Prostate gland (tissue), 2 donors: ENCODE measurements at regions of chr2 and their contacts with region 1.

Region 1: GRCh38 chr2:157789933-157790511 is 86.1 kb downstream of the ACVR1 start:
- DNase-seq: peak; percentile 74
- H3K4me3 ChIP-seq: no peak overlapping the region
- H3K27ac ChIP-seq: peak overlapping the region; percentile 60
- H3K4me1 ChIP-seq: peaks cover 4% of the 10 kb centered on the region
- H3K27me3 ChIP-seq: no peaks in the 10 kb centered on the region
- CTCF ChIP-seq: no peak
- POLR2A ChIP-seq: no peak

Region 2: GRCh38 chr2:157603198-157603597 is 186.8 kb before region 1 on chr2:
- intact Hi-C with region 1: no loop called
- DNase-seq: no peak
- H3K4me3 ChIP-seq: no peak overlapping the region
- H3K27ac ChIP-seq: no peak overlapping the region
- H3K4me1 ChIP-seq: no peaks in the 10 kb centered on the region
- H3K27me3 ChIP-seq: no peaks in the 10 kb centered on the region
- CTCF ChIP-seq: no peak
- POLR2A ChIP-seq: no peak

Region 3: GRCh38 chr2:157838442-157839161 is 48.6 kb after region 1 on chr2:
- intact Hi-C with region 1: loop called (anchors 5 kb)
- DNase-seq: peak; percentile 39
- H3K4me3 ChIP-seq: peak overlapping the region in 1 of 2 donors; percentile 21
- H3K27ac ChIP-seq: peak overlapping the region; percentile 28 to 70
- H3K4me1 ChIP-seq: no peaks in the 10 kb centered on the region
- H3K27me3 ChIP-seq: no peaks in the 10 kb centered on the region
- CTCF ChIP-seq: no peak
- POLR2A ChIP-seq: no peak

Region 4: DNA sequence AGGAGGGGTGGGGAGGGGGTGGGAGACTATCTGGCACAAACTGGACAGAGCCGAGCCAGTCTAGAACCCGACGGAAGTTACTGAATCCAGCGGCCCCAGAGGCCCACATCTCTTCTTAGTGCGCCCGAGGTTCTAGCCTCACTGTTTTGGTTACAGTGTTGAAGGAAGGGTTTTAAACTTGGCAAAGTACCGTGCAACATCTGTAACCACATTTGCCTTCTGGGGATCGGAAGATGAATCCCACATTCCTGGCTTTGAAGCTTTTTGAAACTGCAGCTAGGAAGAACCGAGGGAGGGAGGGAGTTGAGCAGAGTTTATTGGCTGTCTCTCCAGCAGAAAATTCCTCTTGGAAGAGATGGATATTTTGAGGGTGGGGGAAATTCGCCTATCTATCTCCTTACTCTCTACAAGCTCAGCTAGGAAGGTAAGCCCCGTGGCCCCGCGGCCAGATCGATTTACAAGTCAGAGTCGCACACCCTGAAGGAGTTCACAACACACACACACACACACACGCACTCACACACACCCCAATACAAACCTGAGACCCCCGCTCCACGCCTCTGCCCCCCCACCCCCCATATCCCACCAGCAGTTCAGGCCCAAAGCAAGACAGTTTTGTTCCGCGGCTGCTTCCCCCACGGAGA is 85.1 kb after region 1 on chr2:
- intact Hi-C with region 1: loop called (anchors 5 kb)
- DNase-seq: peak; percentile 20
- H3K4me3 ChIP-seq: peak overlapping the region; percentile 76 to 84
- H3K27ac ChIP-seq: peak overlapping the region; percentile 88 to 97
- H3K4me1 ChIP-seq: peaks cover 7% of the 10 kb centered on the region
- H3K27me3 ChIP-seq: no peaks in the 10 kb centered on the region
- CTCF ChIP-seq: no peak
- POLR2A ChIP-seq: no peak